ENCODE measurements at regions of chr7 and their contacts with region 1.

Region 1: GRCh38 chr7:108094933-108095710 is 35.0 kb downstream of the LAMB4 start:
- DNase-seq: peak; percentile 64
- H3K4me3 ChIP-seq: no peak overlapping the region
- H3K27ac ChIP-seq: peak overlapping the region; percentile 15
- H3K4me1 ChIP-seq: peaks cover 22% of the 10 kb centered on the region
- H3K27me3 ChIP-seq: no peaks in the 10 kb centered on the region
- CTCF ChIP-seq: no peak

Region 2: DNA sequence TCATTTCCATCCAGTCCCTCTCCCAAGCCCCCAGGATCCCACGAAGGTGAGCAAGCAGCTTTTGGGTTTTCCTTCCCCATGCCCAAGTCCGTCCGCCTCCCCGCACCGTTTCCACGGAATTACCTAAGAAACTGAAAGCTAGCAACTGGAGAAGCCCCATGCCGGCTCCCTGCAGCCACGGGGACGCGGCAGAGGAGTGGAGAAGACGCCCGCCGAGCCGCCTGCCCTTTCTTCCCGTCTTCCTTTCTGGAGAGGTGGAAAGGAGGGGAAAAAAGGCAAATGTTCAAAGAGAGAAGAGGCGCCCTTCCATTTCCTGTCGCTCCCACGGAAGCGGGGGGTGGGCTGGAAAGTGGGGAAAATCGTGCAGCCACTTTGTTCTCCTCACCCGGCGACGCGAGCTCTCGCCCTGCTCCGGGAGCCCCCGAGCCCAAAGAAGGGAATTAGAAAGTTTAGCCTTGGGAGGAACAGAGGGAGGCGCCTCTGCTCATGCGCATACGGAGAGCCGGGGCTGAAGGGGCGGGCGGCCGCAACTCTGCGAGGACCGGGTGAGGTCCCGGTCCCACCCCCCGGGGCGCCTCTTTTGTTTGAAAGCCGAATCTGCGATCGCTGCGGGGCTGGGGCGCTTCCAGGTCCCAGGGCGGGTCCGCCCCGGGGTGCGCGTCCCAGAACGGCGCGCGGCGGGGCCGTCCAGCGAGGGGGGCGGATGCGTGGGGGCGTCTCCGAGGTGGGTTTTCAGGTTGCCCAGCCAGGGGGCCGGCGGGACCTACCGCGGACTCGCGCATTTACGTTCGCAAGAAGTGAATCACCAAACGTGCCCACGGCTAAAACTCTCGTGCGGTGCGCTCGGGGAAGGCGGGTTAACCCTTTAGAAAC is 92.2 kb before region 1 on chr7 and contains the start of gene LAMB1:
- CTCF ChIA-PET with region 1: no interaction called
- POLR2A ChIA-PET with region 1: no interaction called
- intact Hi-C with region 1: loop called (anchors 2 kb)
- DNase-seq: peak; percentile 90
- H3K4me3 ChIP-seq: peak within 1 kb of the TSS; percentile 76
- H3K27ac ChIP-seq: peak within 1 kb of the TSS; percentile 92
- H3K4me1 ChIP-seq: peaks cover 45% of the 10 kb centered on the region
- H3K27me3 ChIP-seq: no peaks in the 10 kb centered on the region
- CTCF ChIP-seq: no peak
- total RNA-seq, gene LAMB1: 162 and 169 TPM in 2 replicates

Region 3: GRCh38 chr7:108063520-108063933 is 31.6 kb before region 1 on chr7:
- CTCF ChIA-PET with region 1: no interaction called
- POLR2A ChIA-PET with region 1: no interaction called
- intact Hi-C with region 1: no loop called
- DNase-seq: no peak
- H3K4me3 ChIP-seq: no peak overlapping the region
- H3K27ac ChIP-seq: no peak overlapping the region
- H3K4me1 ChIP-seq: no peaks in the 10 kb centered on the region
- H3K27me3 ChIP-seq: no peaks in the 10 kb centered on the region
- CTCF ChIP-seq: no peak

Region 4: GRCh38 chr7:108078211-108078673 is 16.9 kb before region 1 on chr7:
- CTCF ChIA-PET with region 1: no interaction called
- POLR2A ChIA-PET with region 1: interaction called, 11 read pairs
- intact Hi-C with region 1: no loop called
- DNase-seq: no peak
- H3K4me3 ChIP-seq: no peak overlapping the region
- H3K27ac ChIP-seq: no peak overlapping the region
- H3K4me1 ChIP-seq: peaks cover 29% of the 10 kb centered on the region
- H3K27me3 ChIP-seq: no peaks in the 10 kb centered on the region
- CTCF ChIP-seq: no peak

Region 5: DNA sequence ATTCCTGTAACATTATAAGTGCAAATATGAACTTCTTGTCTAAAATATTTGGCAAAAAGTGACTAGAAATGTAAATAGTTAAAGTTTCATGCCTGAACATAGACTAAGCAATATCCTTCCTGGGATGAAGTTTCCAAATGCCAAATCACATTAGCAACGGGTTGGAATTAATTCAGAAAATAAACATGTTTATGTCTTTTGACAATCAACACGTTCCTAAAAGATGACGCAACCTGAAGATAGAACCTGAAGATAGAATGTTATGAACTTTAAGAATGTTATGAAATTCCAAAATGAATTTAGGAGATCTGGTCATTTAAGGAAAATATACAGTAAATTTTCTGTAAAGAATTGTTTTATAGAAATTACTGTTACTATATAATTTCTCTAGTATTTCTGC is 25.8 kb after region 1 on chr7:
- CTCF ChIA-PET with region 1: no interaction called
- POLR2A ChIA-PET with region 1: interaction called, 13 read pairs
- intact Hi-C with region 1: no loop called
- DNase-seq: no peak
- H3K4me3 ChIP-seq: no peak overlapping the region
- H3K27ac ChIP-seq: no peak overlapping the region
- H3K4me1 ChIP-seq: no peaks in the 10 kb centered on the region
- H3K27me3 ChIP-seq: no peaks in the 10 kb centered on the region
- CTCF ChIP-seq: no peak

Measured in A673 (cell line).